Ovary (tissue), 10 donors: ENCODE measurements at regions of chr10 and their contacts with region 1.

Region 1: GRCh38 chr10:15335508-15335907 is 35.6 kb downstream of the FAM171A1 start:
- DNase-seq: no peak
- H3K4me3 ChIP-seq: no peak overlapping the region
- H3K27ac ChIP-seq: no peak overlapping the region
- H3K4me1 ChIP-seq: peaks cover 12% of the 10 kb centered on the region
- H3K27me3 ChIP-seq: no peaks in the 10 kb centered on the region
- CTCF ChIP-seq: no peak
- EP300 ChIP-seq: no peak
- POLR2A ChIP-seq: no peak

Region 2: GRCh38 chr10:15211464-15211979 is 124.0 kb before region 1 on chr10:
- intact Hi-C with region 1: no loop called
- DNase-seq: no peak
- H3K4me3 ChIP-seq: no peak overlapping the region
- H3K27ac ChIP-seq: no peak overlapping the region
- H3K4me1 ChIP-seq: peaks cover 2% of the 10 kb centered on the region
- H3K27me3 ChIP-seq: no peaks in the 10 kb centered on the region
- CTCF ChIP-seq: no peak
- EP300 ChIP-seq: no peak
- POLR2A ChIP-seq: no peak

Region 3: GRCh38 chr10:15300697-15301096 is 34.8 kb before region 1 on chr10:
- intact Hi-C with region 1: loop called in 1 of 4 experiments (anchors 5 kb)
- DNase-seq: no peak
- H3K4me3 ChIP-seq: no peak overlapping the region
- H3K27ac ChIP-seq: no peak overlapping the region
- H3K4me1 ChIP-seq: peaks cover 2% of the 10 kb centered on the region
- H3K27me3 ChIP-seq: no peaks in the 10 kb centered on the region
- CTCF ChIP-seq: no peak
- EP300 ChIP-seq: no peak
- POLR2A ChIP-seq: no peak

Region 4: GRCh38 chr10:15408557-15408956 is 73.0 kb after region 1 on chr10:
- intact Hi-C with region 1: no loop called
- DNase-seq: no peak
- H3K4me3 ChIP-seq: no peak overlapping the region
- H3K27ac ChIP-seq: no peak overlapping the region
- H3K4me1 ChIP-seq: no peaks in the 10 kb centered on the region
- H3K27me3 ChIP-seq: no peaks in the 10 kb centered on the region
- CTCF ChIP-seq: no peak
- EP300 ChIP-seq: no peak
- POLR2A ChIP-seq: no peak

Region 5: GRCh38 chr10:15451137-15452094 is 115.9 kb after region 1 on chr10:
- intact Hi-C with region 1: no loop called
- DNase-seq: no peak
- H3K4me3 ChIP-seq: no peak overlapping the region
- H3K27ac ChIP-seq: no peak overlapping the region
- H3K4me1 ChIP-seq: no peaks in the 10 kb centered on the region
- H3K27me3 ChIP-seq: no peaks in the 10 kb centered on the region
- CTCF ChIP-seq: no peak
- EP300 ChIP-seq: no peak
- POLR2A ChIP-seq: no peak